Kidney (tissue), 22 donors: ENCODE measurements at regions of chr5 and their contacts with region 1.

Region 1: DNA sequence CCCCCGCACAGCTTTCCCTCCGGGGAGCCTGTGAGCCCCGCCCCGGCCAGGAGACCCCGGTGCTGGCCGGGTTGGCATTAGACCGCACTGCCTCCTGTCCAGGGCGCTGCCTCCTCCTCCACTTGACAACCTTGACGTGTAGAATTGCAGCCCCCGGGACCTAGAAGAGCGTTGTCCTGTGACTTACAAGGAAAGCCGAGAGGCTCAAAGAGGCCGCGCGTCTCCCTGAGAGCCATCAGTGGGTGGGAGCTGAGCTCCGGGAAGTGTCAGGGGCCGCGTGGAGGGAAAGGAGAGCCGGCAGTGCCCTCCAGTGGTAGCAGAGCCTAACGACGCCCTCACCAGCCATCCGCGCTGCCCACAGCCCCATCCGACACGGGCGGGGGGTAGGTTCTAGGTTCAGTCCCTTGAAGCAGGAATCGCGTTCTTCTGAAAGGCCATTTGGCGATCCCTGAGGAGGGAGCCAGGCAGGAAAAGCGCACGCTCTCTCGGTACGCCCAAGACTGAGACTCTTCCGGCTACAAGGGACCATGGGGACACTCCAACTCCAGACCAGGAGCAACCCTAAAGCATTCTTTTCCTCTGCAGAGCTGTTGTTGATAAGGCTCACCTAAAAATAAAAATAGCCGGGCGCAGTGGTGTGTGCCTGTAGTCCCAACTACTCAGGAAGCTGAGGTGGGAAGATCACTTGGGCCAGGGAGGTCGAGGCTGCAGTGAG is 40.6 kb upstream of the SAP30L start:
- DNase-seq: peak; percentile 88 to 93 (median 90)
- H3K4me3 ChIP-seq: peak overlapping the region; percentile 18 to 52 (median 44)
- H3K27ac ChIP-seq: no peak overlapping the region
- H3K4me1 ChIP-seq: no peaks in the 10 kb centered on the region
- H3K27me3 ChIP-seq: no peaks in the 10 kb centered on the region
- CTCF ChIP-seq: peak; percentile 90

Region 2: DNA sequence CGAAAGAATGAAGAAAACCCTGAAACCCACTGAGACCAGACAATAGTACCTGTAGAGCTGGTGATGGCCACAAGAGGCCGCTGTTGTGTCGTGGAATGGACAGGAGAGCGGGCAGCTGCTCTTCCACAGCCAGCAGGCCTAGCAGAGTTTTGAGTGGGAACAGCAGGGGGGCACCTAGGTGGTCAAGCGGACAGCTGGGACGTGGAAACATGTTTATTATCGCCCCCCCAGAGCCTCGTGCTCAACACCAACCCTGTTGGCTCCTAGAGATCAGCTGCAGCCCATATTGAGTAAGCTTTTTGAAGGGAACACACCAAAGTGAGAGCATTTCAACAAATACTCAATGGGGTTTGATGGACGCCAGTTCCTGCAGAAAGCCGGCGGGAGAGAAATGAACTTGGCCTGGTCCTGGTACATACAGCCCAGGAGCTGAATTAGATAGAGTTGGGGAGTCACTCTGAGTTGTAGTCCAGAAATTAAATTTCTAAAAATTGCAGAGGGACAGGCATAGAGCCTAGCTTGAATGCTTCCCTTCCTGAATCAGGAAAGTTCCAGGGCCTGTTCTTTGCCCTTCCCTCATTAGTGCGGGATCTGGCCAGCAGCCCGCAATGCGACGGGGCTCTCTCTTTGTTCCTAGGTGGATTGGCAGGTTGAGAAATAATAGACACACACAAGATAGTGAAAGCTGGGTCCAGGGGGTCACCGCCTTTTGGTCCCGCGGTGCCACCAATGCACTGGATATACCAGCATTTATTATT is 332.6 kb before region 1 on chr5:
- intact Hi-C with region 1: loop called (anchors 5 kb)
- DNase-seq: peak; percentile 84 to 91 (median 86)
- H3K4me3 ChIP-seq: no peak overlapping the region
- H3K27ac ChIP-seq: no peak overlapping the region
- H3K4me1 ChIP-seq: no peaks in the 10 kb centered on the region
- H3K27me3 ChIP-seq: no peaks in the 10 kb centered on the region
- CTCF ChIP-seq: peak; percentile 92

Region 3: DNA sequence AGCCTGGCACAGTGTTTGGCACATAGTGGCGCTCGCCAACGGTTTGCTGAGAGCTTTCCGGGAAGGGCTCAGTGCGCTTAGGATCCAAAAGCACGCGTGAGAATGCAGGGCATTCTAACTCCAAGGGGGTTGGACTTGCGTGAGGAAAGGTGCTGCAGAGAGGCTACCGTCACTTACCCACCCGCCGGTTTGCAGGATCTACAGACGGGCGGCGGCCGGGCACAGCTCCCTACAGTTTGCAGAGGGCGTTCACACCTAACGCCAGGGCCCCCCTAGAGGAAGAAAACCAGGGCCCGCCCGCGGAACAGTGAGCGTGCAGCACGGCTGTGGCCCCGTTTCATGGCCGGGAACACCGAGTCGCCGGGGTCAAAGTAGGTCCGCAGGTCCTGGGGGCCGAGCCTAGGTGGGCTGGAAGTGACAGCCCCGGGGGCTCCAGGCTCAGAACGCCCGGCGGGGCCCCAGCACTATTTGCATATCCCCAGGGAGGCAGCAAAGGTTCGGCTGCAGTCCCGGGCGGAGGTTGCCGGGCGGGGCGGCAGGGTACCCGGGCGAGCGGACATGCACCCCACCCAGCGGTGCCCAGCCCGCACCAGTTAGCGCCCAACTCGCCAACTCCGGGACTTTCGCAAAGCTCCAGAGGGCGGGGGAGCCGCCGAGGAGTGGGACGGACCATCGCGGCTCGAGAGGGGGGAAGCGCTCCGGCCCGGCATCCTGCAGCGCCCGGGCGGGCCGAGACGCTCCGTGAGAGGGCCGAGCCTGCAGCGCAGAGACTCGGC is 215.2 kb before region 1 on chr5:
- intact Hi-C with region 1: loop called (anchors 10 kb)
- DNase-seq: peak; percentile 78 to 95 (median 86)
- H3K4me3 ChIP-seq: peak overlapping the region; percentile 66 to 84 (median 70)
- H3K27ac ChIP-seq: peak overlapping the region in 1 of 2 donors; percentile 64
- H3K4me1 ChIP-seq: peaks cover 0 to 15% (median 5%) of the 10 kb centered on the region in 3 donors
- H3K27me3 ChIP-seq: peaks cover 2% of the 10 kb centered on the region
- CTCF ChIP-seq: peak; percentile 15

Region 4: GRCh38 chr5:154654486-154655371 is 249.5 kb after region 1 on chr5:
- intact Hi-C with region 1: no loop called
- DNase-seq: peak in 3 of 5 donors; percentile 61 to 81 (median 72)
- H3K4me3 ChIP-seq: peak overlapping the region in 1 of 3 donors; percentile 16
- H3K27ac ChIP-seq: peak overlapping the region in 1 of 2 donors; percentile 23
- H3K4me1 ChIP-seq: peaks cover 0 to 3% (median 0%) of the 10 kb centered on the region in 3 donors
- H3K27me3 ChIP-seq: no peaks in the 10 kb centered on the region
- CTCF ChIP-seq: no peak